A549 (cell line): ENCODE measurements at regions of chr1 and their contacts with region 1.

Region 1: GRCh38 chr1:16043521-16043920 is at the start of gene CLCNKB:
- DNase-seq: no peak
- ATAC-seq: no peak
- H3K4me3 ChIP-seq: no peak within 1 kb of the TSS
- H3K27ac ChIP-seq: no peak within 1 kb of the TSS
- H3K4me1 ChIP-seq: no peaks in the 10 kb centered on the region; the same call in 2 of the 3 replicates
- CTCF ChIP-seq: no peak
- EP300 ChIP-seq: no peak
- POLR2A ChIP-seq: no peak
- RAD21 ChIP-seq: no peak
- polyA plus RNA-seq, gene CLCNKB: 0.11 and 0.14 TPM in 2 replicates

Region 2: GRCh38 chr1:16055613-16056520 is 12.3 kb after region 1 on chr1:
- CTCF ChIA-PET with region 1: interaction called, 18 read pairs
- POLR2A ChIA-PET with region 1: no interaction called
- DNase-seq: peak; percentile 82 to 84
- ATAC-seq: peak; percentile 76 to 92
- H3K4me3 ChIP-seq: no peak overlapping the region
- H3K27ac ChIP-seq: peak overlapping the region in 1 of 2 experiments; percentile 46; a peak in 2 of 6 replicates
- H3K4me1 ChIP-seq: peaks cover 6% of the 10 kb centered on the region; the same call in 2 of the 3 replicates
- CTCF ChIP-seq: peak; percentile 74
- EP300 ChIP-seq: no peak
- POLR2A ChIP-seq: no peak
- RAD21 ChIP-seq: peak; percentile 87 to 90

Region 3: GRCh38 chr1:16067127-16067768 is 23.7 kb after region 1 on chr1:
- CTCF ChIA-PET with region 1: no interaction called
- POLR2A ChIA-PET with region 1: no interaction called
- DNase-seq: peak; percentile 48 to 52
- ATAC-seq: peak; percentile 22 to 35; a peak in 2 of 6 replicates
- H3K4me3 ChIP-seq: no peak overlapping the region
- H3K27ac ChIP-seq: peak overlapping the region; percentile 52 to 66; a peak in 4 of 6 replicates
- H3K4me1 ChIP-seq: peaks cover 26% of the 10 kb centered on the region
- CTCF ChIP-seq: no peak
- EP300 ChIP-seq: no peak
- POLR2A ChIP-seq: no peak
- RAD21 ChIP-seq: no peak